Dendritic cell treated with granulocyte-macrophage colony-stimulating factor and Interleukin-4, amounts not matched to agents 40 ng/mL and 50 ng/mL, for 4 days (primary cell): ENCODE measurements at regions of chr5 and their contacts with region 1.

Region 1: GRCh38 chr5:67246108-67246507 is 49.5 kb upstream of the CD180 start:
- H3K4me3 Mint-ChIP-seq: no peak overlapping the region
- H3K27ac Mint-ChIP-seq: no peak overlapping the region
- H3K4me1 Mint-ChIP-seq: peaks cover 14% of the 10 kb centered on the region
- H3K27me3 Mint-ChIP-seq: no peaks in the 10 kb centered on the region

Region 2: GRCh38 chr5:67395790-67396418 is 149.8 kb after region 1 on chr5:
- intact Hi-C with region 1: loop called (anchors 5 kb)
- H3K4me3 Mint-ChIP-seq: no peak overlapping the region
- H3K27ac Mint-ChIP-seq: no peak overlapping the region
- H3K4me1 Mint-ChIP-seq: no peaks in the 10 kb centered on the region
- H3K27me3 Mint-ChIP-seq: no peaks in the 10 kb centered on the region

Region 3: DNA sequence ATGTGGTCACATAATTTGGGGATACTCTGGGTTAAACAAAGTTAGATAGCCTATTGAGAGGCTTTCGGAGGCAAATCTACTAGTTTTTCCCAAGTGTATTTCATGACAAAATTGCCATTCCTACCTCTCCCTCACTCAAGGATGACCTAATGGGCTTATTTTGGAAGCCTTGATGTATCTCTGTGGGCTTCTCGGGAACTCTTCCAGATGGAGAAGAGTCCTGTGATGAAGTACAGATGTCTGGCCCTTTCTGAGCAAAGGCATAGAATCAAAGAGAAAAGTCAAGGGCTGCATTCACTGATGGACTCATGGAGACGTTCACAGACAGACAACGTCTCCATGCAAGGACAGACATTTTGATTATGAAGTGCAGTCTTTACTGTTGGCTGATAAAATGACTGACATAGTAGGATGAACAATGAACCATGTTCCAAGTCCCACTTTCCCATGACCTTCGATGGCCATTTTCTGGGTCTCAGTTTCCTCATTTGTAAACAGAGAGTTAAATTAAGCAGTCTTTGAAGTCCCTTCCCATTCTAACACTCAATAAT is 297.7 kb after region 1 on chr5:
- intact Hi-C with region 1: loop called (anchors 10 kb)
- H3K4me3 Mint-ChIP-seq: no peak overlapping the region
- H3K27ac Mint-ChIP-seq: no peak overlapping the region
- H3K4me1 Mint-ChIP-seq: peaks cover 5% of the 10 kb centered on the region
- H3K27me3 Mint-ChIP-seq: no peaks in the 10 kb centered on the region

Region 4: DNA sequence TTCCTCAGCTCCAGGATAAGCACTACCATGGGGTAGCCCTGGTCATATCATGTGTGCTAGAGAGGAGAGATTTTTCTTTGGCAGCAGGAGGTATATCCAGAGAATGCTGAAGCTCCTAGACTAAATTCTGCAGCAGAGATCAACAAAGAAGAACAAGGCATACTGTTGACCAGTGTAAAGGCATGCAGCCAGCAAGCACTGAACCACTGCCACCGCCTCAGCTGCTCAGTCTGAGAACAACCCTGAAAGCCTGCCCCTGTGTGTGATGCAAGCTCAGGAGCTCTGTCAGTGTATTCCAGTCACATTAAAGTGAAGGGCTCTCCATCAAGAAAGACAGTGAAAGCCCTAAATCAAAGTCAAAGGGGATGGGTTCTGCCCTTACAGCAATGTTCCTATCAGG is 390.0 kb after region 1 on chr5:
- intact Hi-C with region 1: no loop called
- H3K4me3 Mint-ChIP-seq: no peak overlapping the region
- H3K27ac Mint-ChIP-seq: no peak overlapping the region
- H3K4me1 Mint-ChIP-seq: peaks cover 6% of the 10 kb centered on the region
- H3K27me3 Mint-ChIP-seq: no peaks in the 10 kb centered on the region

Region 5: GRCh38 chr5:68252673-68253623 is 1006.8 kb after region 1 on chr5:
- intact Hi-C with region 1: loop called (anchors 2 kb)
- H3K4me3 Mint-ChIP-seq: no peak overlapping the region
- H3K27ac Mint-ChIP-seq: peak overlapping the region; percentile 52
- H3K4me1 Mint-ChIP-seq: peaks cover 79% of the 10 kb centered on the region
- H3K27me3 Mint-ChIP-seq: no peaks in the 10 kb centered on the region

Region 6: DNA sequence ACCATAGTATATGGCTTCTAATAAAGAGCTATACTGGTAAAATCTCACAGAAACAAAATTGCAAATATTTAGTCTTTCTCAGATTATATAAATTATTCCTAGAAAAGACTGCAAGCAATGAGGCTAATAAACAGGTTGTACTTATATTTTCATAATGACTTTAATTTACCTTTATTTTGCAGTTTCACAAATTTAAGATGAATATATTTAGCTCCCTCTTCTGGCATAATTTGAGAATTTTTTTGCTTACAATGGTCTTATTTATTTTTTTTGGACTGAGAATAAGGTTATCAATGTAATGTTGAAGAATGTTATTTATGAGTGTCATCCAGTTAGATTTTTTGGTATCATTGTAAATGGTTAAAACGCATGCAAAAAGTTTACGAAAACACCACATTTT is 1026.2 kb after region 1 on chr5:
- intact Hi-C with region 1: loop called (anchors 5 kb)
- H3K4me3 Mint-ChIP-seq: no peak overlapping the region
- H3K27ac Mint-ChIP-seq: no peak overlapping the region
- H3K4me1 Mint-ChIP-seq: peaks cover 30% of the 10 kb centered on the region
- H3K27me3 Mint-ChIP-seq: no peaks in the 10 kb centered on the region

Region 7: GRCh38 chr5:68460147-68460798 is 1214.2 kb after region 1 on chr5:
- intact Hi-C with region 1: loop called (anchors 10 kb)
- H3K4me3 Mint-ChIP-seq: no peak overlapping the region
- H3K27ac Mint-ChIP-seq: no peak overlapping the region
- H3K4me1 Mint-ChIP-seq: no peaks in the 10 kb centered on the region
- H3K27me3 Mint-ChIP-seq: no peaks in the 10 kb centered on the region